GM10248 (cell line): ENCODE measurements at regions of chr1 and their contacts with region 1.

Region 1: DNA sequence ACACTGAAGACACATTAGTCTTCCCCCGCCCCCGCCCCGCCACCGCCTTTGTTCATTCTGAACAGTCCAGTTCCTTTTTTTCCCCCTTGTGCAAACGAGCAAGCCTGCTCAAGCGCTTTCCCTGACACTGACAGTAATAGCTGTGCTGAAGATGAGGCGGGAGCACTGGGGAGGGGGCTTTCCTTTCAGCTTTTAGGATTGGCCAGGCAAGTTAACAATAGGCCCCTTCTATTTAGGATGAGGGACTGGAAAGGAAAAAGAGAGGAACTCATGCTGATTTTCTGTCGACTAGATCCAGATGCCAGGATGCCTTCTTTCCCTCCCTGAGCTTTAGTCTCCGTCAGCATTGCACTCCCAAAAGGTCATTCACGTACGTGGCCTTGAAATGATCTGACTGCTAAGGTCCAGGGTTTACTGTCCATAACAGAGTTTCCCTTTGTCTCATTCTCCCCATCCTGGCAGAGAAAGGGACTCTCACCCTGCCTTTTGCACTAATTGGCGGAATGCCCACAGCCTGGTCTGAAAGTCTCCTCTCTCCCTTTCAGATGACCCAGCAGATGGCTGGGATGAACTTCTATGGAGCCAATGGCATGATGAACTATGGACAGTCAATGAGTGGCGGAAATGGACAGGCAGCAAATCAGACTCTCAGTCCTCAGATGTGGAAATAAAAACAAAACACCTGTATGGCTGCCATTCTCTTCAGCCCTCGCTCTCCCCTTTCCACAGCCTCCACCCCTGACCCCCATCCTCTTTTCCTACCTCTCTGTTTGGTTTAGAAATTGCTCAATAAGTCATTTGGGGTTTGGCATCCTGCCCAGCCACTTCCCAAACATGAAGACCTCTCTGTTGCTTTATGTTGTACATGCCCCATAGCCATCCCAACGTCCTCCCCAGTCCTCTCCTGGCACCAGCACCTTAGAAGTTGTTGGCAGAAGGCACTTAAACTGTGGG is 28.6 kb upstream of the ZFP69B start:
- DNase-seq: no peak
- CTCF ChIP-seq: no peak

Region 2: GRCh38 chr1:40404670-40405462 is 16.8 kb before region 1 on chr1:
- CTCF ChIA-PET with region 1: interaction called, 12 read pairs
- POLR2A ChIA-PET with region 1: no interaction called
- DNase-seq: no peak
- CTCF ChIP-seq: peak; percentile 69

Region 3: DNA sequence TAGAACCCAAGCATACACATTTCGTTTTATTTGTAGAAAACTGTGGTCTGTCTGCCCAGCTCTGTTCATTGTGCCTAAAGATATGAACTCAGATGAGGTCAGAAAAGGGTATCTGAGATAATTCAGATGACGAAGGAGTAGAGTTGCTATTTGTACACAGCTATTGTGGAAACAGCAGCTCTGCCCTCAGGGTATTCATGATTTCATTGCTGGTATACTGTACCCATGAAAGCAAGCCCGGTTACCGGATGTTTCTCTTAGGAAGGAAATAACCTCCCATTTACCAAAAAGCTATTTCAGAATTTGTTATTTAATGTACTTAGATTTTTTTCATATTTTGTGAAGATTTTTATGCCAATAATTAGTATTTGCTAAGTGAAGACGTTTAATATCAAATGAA is 10.4 kb before region 1 on chr1:
- CTCF ChIA-PET with region 1: interaction called, 10 read pairs
- POLR2A ChIA-PET with region 1: interaction called, 3 read pairs
- DNase-seq: no peak
- CTCF ChIP-seq: no peak

Region 4: GRCh38 chr1:40438391-40439015 is 16.8 kb after region 1 on chr1:
- CTCF ChIA-PET with region 1: interaction called, 27 read pairs
- POLR2A ChIA-PET with region 1: no interaction called
- DNase-seq: peak; percentile 34
- CTCF ChIP-seq: no peak